ENCODE measurements at regions of chr7 and their contacts with region 1.

Region 1: GRCh38 chr7:107044347-107045194 is at the start of gene PRKAR2B:
- DNase-seq: peak; percentile 55 to 91 (median 80)
- ATAC-seq: peak; percentile 93
- H3K4me3 ChIP-seq: peak within 1 kb of the TSS; percentile 50 to 58
- H3K4me3 Mint-ChIP-seq: peak within 1 kb of the TSS; percentile 86
- H3K27ac ChIP-seq: no peak within 1 kb of the TSS
- H3K27ac Mint-ChIP-seq: no peak within 1 kb of the TSS
- H3K4me1 ChIP-seq: peaks cover 13% of the 10 kb centered on the region
- H3K4me1 Mint-ChIP-seq: peaks cover 10% of the 10 kb centered on the region
- H3K27me3 ChIP-seq: peaks cover 7% of the 10 kb centered on the region in 2 experiments
- H3K27me3 Mint-ChIP-seq: peaks cover 7% of the 10 kb centered on the region
- CTCF ChIP-seq: no peak
- total RNA-seq, gene PRKAR2B: 0.33 to 0.60 TPM

Region 2: GRCh38 chr7:106793015-106793975 is 251.3 kb before region 1 on chr7:
- CTCF ChIA-PET with region 1: no interaction called
- POLR2A ChIA-PET with region 1: no interaction called
- intact Hi-C with region 1: loop called (anchors 5 to 10 kb)
- DNase-seq: peak in 6 of 9 experiments; percentile 16 to 75 (median 42)
- ATAC-seq: peak; percentile 82
- H3K4me3 ChIP-seq: no peak overlapping the region
- H3K4me3 Mint-ChIP-seq: no peak overlapping the region
- H3K27ac ChIP-seq: no peak overlapping the region
- H3K27ac Mint-ChIP-seq: no peak overlapping the region
- H3K4me1 ChIP-seq: no peaks in the 10 kb centered on the region
- H3K4me1 Mint-ChIP-seq: peaks cover 3% of the 10 kb centered on the region
- H3K27me3 ChIP-seq: no peaks in the 10 kb centered on the region
- H3K27me3 Mint-ChIP-seq: no peaks in the 10 kb centered on the region
- CTCF ChIP-seq: peak; percentile 88

Region 3: GRCh38 chr7:106870983-106871410 is 173.6 kb before region 1 on chr7:
- CTCF ChIA-PET with region 1: no interaction called
- POLR2A ChIA-PET with region 1: no interaction called
- intact Hi-C with region 1: loop called in 1 of 2 experiments (anchors 5 kb)
- DNase-seq: peak in 2 of 9 experiments; percentile 30 to 52
- ATAC-seq: peak; percentile 62
- H3K4me3 ChIP-seq: peak overlapping the region in 1 of 2 experiments; percentile 25
- H3K4me3 Mint-ChIP-seq: peak overlapping the region; percentile 55
- H3K27ac ChIP-seq: no peak overlapping the region
- H3K27ac Mint-ChIP-seq: peak overlapping the region; percentile 78
- H3K4me1 ChIP-seq: peaks cover 37% of the 10 kb centered on the region
- H3K4me1 Mint-ChIP-seq: peaks cover 81% of the 10 kb centered on the region
- H3K27me3 ChIP-seq: no peaks in the 10 kb centered on the region
- H3K27me3 Mint-ChIP-seq: no peaks in the 10 kb centered on the region
- CTCF ChIP-seq: no peak

Region 4: GRCh38 chr7:107007007-107007891 is 37.3 kb before region 1 on chr7:
- CTCF ChIA-PET with region 1: no interaction called
- POLR2A ChIA-PET with region 1: no interaction called
- intact Hi-C with region 1: no loop called
- DNase-seq: no peak
- ATAC-seq: no peak
- H3K4me3 ChIP-seq: no peak overlapping the region
- H3K4me3 Mint-ChIP-seq: no peak overlapping the region
- H3K27ac ChIP-seq: no peak overlapping the region
- H3K27ac Mint-ChIP-seq: no peak overlapping the region
- H3K4me1 ChIP-seq: no peaks in the 10 kb centered on the region
- H3K4me1 Mint-ChIP-seq: no peaks in the 10 kb centered on the region
- H3K27me3 ChIP-seq: no peaks in the 10 kb centered on the region
- H3K27me3 Mint-ChIP-seq: peaks cover 7% of the 10 kb centered on the region
- CTCF ChIP-seq: no peak

Region 5: DNA sequence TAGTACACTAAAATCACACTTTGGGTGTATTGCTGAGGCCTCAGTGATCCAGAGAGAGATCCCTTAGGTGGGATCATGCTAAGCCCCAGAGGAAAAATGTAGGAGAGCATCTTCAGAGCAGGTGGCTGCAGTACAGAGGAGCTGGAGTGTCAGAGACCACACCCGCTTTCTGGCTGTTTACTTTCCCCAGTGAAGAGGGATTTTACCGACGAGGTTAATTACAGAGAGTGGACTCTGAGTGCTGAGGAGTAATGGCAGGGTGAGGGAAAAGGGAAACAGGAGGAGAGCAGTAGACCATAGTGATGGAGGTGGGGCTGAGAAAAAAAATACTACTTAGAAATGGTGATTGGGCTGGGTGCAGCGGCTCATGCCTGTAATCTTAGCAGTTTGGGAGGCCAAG is 80.9 kb after region 1 on chr7:
- CTCF ChIA-PET with region 1: no interaction called
- POLR2A ChIA-PET with region 1: no interaction called
- intact Hi-C with region 1: loop called (anchors 2 to 5 kb)
- DNase-seq: no peak
- ATAC-seq: no peak
- H3K4me3 ChIP-seq: no peak overlapping the region
- H3K4me3 Mint-ChIP-seq: peak overlapping the region; percentile 78
- H3K27ac ChIP-seq: peak overlapping the region in 1 of 2 experiments; percentile 83
- H3K27ac Mint-ChIP-seq: peak overlapping the region; percentile 91
- H3K4me1 ChIP-seq: peaks cover 8% of the 10 kb centered on the region
- H3K4me1 Mint-ChIP-seq: peaks cover 20% of the 10 kb centered on the region
- H3K27me3 ChIP-seq: no peaks in the 10 kb centered on the region
- H3K27me3 Mint-ChIP-seq: no peaks in the 10 kb centered on the region
- CTCF ChIP-seq: no peak

Region 6: DNA sequence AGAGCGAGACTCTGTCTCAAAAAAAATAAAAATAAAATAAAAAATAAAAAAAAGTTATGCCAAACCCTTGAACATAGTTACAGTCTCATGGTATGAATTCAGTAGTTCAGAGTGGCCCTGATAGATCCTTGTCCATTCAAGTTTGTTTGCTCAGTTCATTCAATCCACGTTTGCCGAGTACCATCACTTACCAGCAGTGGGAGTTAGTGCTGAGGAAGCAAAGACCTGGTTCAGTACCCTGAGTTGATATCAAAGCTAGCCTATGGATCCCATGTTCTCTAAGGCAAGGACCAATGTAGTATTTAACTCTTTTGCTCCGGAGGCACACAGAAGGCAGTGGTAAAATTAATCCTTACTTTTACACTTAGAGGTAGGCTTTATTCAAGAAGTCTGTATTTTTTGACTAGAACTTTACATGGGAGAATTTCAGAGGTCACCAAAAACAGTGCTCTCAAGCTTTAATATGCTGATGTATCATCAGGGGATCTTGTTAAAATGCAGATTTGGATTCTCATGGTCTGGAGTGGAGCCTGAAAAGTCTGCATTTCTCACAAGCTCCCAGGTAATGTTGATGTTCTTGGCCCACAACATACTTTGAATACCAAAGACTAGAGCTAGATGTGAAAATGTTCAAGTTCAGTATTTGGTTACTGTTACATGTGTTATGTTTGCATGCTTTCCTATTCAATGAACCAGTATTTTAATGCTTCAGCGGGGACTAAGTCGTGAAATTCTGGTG is 86.1 kb after region 1 on chr7:
- CTCF ChIA-PET with region 1: no interaction called
- POLR2A ChIA-PET with region 1: no interaction called
- intact Hi-C with region 1: loop called (anchors 2 to 5 kb)
- DNase-seq: no peak
- ATAC-seq: no peak
- H3K4me3 ChIP-seq: no peak overlapping the region
- H3K4me3 Mint-ChIP-seq: no peak overlapping the region
- H3K27ac ChIP-seq: no peak overlapping the region
- H3K27ac Mint-ChIP-seq: no peak overlapping the region
- H3K4me1 ChIP-seq: peaks cover 8% of the 10 kb centered on the region
- H3K4me1 Mint-ChIP-seq: peaks cover 15% of the 10 kb centered on the region
- H3K27me3 ChIP-seq: no peaks in the 10 kb centered on the region
- H3K27me3 Mint-ChIP-seq: no peaks in the 10 kb centered on the region
- CTCF ChIP-seq: no peak

Region 7: DNA sequence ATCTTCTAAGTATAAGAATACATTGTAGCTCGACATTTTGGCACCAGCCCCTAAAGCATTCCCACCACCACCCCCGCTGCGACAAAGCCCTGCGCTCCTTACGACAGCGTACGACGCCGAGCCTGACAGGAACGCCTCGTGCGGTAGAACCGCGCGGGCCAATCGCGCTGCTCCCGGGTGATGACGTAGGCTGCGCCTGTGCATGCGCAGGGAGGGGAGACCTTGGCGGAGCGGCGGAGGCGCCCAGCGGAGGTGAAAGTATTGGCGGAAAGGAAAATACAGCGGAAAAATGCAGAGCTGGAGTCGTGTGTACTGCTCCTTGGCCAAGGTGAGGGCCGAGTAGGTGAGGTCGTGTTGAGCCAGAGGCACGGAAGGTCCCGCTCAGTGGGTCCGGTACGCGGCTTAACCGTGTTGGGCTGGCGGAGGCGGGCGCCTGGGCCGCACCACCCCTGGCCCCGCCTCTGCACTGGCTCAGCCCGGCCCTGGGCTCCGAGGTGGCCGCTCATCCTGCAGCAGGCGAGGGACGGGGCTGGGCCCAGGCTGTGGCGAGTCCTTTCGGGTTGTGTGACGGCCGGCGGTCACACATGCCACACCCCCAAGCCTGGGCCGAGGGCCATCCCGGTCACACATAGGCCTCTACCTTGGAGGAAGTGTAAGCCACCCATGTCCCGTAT is 846.5 kb after region 1 on chr7 and contains the start of gene DLD:
- CTCF ChIA-PET with region 1: no interaction called
- POLR2A ChIA-PET with region 1: no interaction called
- intact Hi-C with region 1: loop called (anchors 5 kb)
- DNase-seq: peak; percentile 86 to 97 (median 93)
- ATAC-seq: peak; percentile 97
- H3K4me3 ChIP-seq: peak within 1 kb of the TSS; percentile 79 to 86
- H3K4me3 Mint-ChIP-seq: peak within 1 kb of the TSS; percentile 98
- H3K27ac ChIP-seq: peak within 1 kb of the TSS; percentile 88 to 94
- H3K27ac Mint-ChIP-seq: peak within 1 kb of the TSS; percentile 98
- H3K4me1 ChIP-seq: peaks cover 48% of the 10 kb centered on the region
- H3K4me1 Mint-ChIP-seq: peaks cover 48% of the 10 kb centered on the region
- H3K27me3 ChIP-seq: no peaks in the 10 kb centered on the region
- H3K27me3 Mint-ChIP-seq: no peaks in the 10 kb centered on the region
- CTCF ChIP-seq: no peak
- total RNA-seq, gene DLD: 83.5 to 85.9 TPM

Region 8: DNA sequence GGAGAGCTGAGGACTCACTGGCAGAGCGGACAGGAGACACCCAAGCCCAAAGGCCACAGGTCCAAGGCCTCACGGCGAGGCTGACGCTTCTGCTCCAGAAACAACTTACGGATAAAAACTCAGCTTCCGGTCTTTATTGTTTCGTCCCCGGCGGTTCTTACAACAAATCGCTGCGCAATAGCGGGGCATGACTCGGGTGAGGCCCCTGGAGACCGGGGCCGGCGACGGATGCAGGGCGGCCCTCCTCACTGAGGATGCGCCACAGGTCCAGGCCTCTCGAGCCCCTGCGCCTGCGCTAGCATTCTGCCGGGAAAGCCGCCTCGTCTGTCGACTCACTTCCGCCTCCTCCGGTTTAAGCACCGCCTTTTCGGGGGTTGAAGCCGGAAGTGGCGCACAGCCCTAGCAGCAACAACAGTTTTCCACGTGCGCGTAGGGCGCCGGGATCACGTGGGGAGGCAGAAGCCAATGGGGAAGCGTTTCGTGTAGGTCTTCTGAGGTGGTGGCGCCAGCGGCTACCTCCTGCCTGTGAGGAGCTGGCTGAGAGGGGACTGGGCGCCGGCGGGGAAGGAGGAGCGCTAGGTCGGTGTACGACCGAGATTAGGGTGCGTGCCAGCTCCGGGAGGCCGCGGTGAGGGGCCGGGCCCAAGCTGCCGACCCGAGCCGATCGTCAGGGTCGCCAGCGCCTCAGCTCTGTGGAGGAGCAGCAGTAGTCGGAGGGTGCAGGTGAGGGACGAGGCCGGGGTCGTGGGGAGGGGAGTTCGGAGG is 1525.0 kb after region 1 on chr7 and contains the starts of genes DNAJB9 and THAP5:
- CTCF ChIA-PET with region 1: no interaction called
- POLR2A ChIA-PET with region 1: no interaction called
- intact Hi-C with region 1: loop called in 1 of 2 experiments (anchors 10 kb)
- DNase-seq: peak; percentile 98 to 100 (median 99)
- ATAC-seq: peak; percentile 84
- H3K4me3 ChIP-seq: peak within 1 kb of the TSS; percentile 90 to 96
- H3K4me3 Mint-ChIP-seq: peak within 1 kb of the TSS; percentile 90
- H3K27ac ChIP-seq: peak within 1 kb of the TSS; percentile 99 to 100
- H3K27ac Mint-ChIP-seq: peak within 1 kb of the TSS; percentile 98
- H3K4me1 ChIP-seq: peaks cover 45% of the 10 kb centered on the region
- H3K4me1 Mint-ChIP-seq: peaks cover 65% of the 10 kb centered on the region
- H3K27me3 ChIP-seq: no peaks in the 10 kb centered on the region
- H3K27me3 Mint-ChIP-seq: no peaks in the 10 kb centered on the region
- CTCF ChIP-seq: no peak
- total RNA-seq, gene DNAJB9: 66.7 to 67.7 TPM
- total RNA-seq, gene THAP5: 10.7 to 13.5 TPM